Caco-2 (cell line): ENCODE measurements at regions of chr9 and their contacts with region 1.

Region 1: GRCh38 chr9:32968101-32969011 is 33.1 kb downstream of the APTX start:
- DNase-seq: peak in 1 of 2 experiments; percentile 52
- H3K4me3 ChIP-seq: no peak overlapping the region
- H3K4me3 Mint-ChIP-seq: no peak overlapping the region
- H3K27ac Mint-ChIP-seq: no peak overlapping the region
- H3K4me1 ChIP-seq: no peaks in the 10 kb centered on the region
- H3K4me1 Mint-ChIP-seq: no peaks in the 10 kb centered on the region
- H3K27me3 ChIP-seq: no peaks in the 10 kb centered on the region
- H3K27me3 Mint-ChIP-seq: no peaks in the 10 kb centered on the region
- CTCF ChIP-seq: peak; percentile 57 to 69

Region 2: DNA sequence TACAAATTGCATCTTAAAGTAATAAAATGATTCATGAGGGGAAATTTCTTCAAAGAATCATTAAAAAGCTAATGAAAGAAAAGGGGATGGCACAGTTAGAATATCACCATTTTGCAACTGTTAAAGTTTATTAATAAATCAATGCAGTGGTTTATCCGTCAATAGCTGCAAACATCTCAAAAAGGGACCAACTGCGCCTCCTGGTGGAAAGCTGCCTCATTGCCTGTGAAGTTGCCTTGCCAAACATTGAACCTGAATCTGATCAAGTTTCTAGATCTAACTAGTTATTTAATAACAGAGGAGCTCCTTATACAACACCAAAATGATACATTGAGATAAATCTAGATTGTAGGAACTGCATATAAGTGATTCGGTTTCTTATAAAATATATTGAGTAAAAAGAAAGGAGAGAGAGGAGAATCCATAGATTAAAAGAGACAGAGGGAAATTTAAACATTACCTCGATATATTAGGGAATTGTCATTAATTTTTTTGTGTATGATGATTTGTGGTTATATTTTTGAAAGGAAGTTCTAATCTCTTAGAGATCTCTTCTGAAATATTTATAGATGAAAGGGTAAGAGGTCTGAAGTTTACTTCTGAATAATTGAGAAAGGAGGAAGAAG is 388.5 kb before region 1 on chr9:
- CTCF ChIA-PET with region 1: interaction called, 39 read pairs
- POLR2A ChIA-PET with region 1: no interaction called
- intact Hi-C with region 1: loop called (anchors 2 kb)
- DNase-seq: peak; percentile 59 to 71
- H3K4me3 ChIP-seq: no peak overlapping the region
- H3K4me3 Mint-ChIP-seq: no peak overlapping the region
- H3K27ac Mint-ChIP-seq: no peak overlapping the region
- H3K4me1 ChIP-seq: peaks cover 15% of the 10 kb centered on the region
- H3K4me1 Mint-ChIP-seq: peaks cover 14% of the 10 kb centered on the region
- H3K27me3 ChIP-seq: no peaks in the 10 kb centered on the region
- H3K27me3 Mint-ChIP-seq: peaks cover 5% of the 10 kb centered on the region
- CTCF ChIP-seq: peak; percentile 90 to 92

Region 3: GRCh38 chr9:32589083-32589723 is 379.2 kb before region 1 on chr9:
- CTCF ChIA-PET with region 1: interaction called, 25 read pairs
- POLR2A ChIA-PET with region 1: no interaction called
- intact Hi-C with region 1: loop called (anchors 1 kb)
- DNase-seq: peak in 1 of 2 experiments; percentile 31
- H3K4me3 ChIP-seq: no peak overlapping the region
- H3K4me3 Mint-ChIP-seq: no peak overlapping the region
- H3K27ac Mint-ChIP-seq: no peak overlapping the region
- H3K4me1 ChIP-seq: no peaks in the 10 kb centered on the region
- H3K4me1 Mint-ChIP-seq: no peaks in the 10 kb centered on the region
- H3K27me3 ChIP-seq: no peaks in the 10 kb centered on the region
- H3K27me3 Mint-ChIP-seq: peaks cover 21% of the 10 kb centered on the region
- CTCF ChIP-seq: peak in 1 of 2 experiments; percentile 54

Region 4: GRCh38 chr9:32841314-32841713 is 127.0 kb before region 1 on chr9:
- CTCF ChIA-PET with region 1: interaction called, 3 read pairs
- POLR2A ChIA-PET with region 1: no interaction called
- intact Hi-C with region 1: loop called (anchors 5 kb)
- DNase-seq: no peak
- H3K4me3 ChIP-seq: no peak overlapping the region
- H3K4me3 Mint-ChIP-seq: no peak overlapping the region
- H3K27ac Mint-ChIP-seq: no peak overlapping the region
- H3K4me1 ChIP-seq: no peaks in the 10 kb centered on the region
- H3K4me1 Mint-ChIP-seq: no peaks in the 10 kb centered on the region
- H3K27me3 ChIP-seq: no peaks in the 10 kb centered on the region
- H3K27me3 Mint-ChIP-seq: peaks cover 17% of the 10 kb centered on the region
- CTCF ChIP-seq: peak in 1 of 2 experiments; percentile 10

Region 5: DNA sequence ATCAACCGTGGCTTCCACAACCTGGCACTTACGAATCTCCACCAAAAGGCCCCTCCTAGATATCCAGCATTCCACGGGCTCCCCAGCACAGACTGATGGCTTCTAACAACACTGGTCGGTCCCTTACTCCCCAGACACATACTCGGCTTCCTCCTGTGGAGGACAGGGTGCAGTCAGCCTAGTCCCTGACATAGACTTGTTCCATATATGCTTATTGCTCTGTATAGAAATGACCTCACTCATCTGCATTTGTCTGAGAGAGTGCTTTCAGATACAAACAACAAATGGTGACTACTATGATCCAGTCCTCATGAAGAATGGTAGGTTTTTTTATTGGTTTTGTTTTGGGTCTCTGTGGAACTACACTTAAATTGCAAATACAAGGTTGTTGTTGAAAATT is 112.6 kb before region 1 on chr9:
- CTCF ChIA-PET with region 1: no interaction called
- POLR2A ChIA-PET with region 1: no interaction called
- intact Hi-C with region 1: loop called (anchors 5 kb)
- DNase-seq: no peak
- H3K4me3 ChIP-seq: no peak overlapping the region
- H3K4me3 Mint-ChIP-seq: no peak overlapping the region
- H3K27ac Mint-ChIP-seq: no peak overlapping the region
- H3K4me1 ChIP-seq: no peaks in the 10 kb centered on the region
- H3K4me1 Mint-ChIP-seq: no peaks in the 10 kb centered on the region
- H3K27me3 ChIP-seq: no peaks in the 10 kb centered on the region
- H3K27me3 Mint-ChIP-seq: peaks cover 23% of the 10 kb centered on the region
- CTCF ChIP-seq: no peak

Region 6: GRCh38 chr9:33167046-33167808 is 198.9 kb after region 1 on chr9 and contains the start of gene B4GALT1:
- CTCF ChIA-PET with region 1: no interaction called
- POLR2A ChIA-PET with region 1: no interaction called
- intact Hi-C with region 1: no loop called
- DNase-seq: peak; percentile 95 to 97
- H3K4me3 ChIP-seq: peak within 1 kb of the TSS; percentile 91
- H3K4me3 Mint-ChIP-seq: peak within 1 kb of the TSS; percentile 89
- H3K27ac Mint-ChIP-seq: peak within 1 kb of the TSS; percentile 98
- H3K4me1 ChIP-seq: peaks cover 64% of the 10 kb centered on the region
- H3K4me1 Mint-ChIP-seq: peaks cover 66% of the 10 kb centered on the region
- H3K27me3 ChIP-seq: no peaks in the 10 kb centered on the region
- H3K27me3 Mint-ChIP-seq: no peaks in the 10 kb centered on the region
- CTCF ChIP-seq: peak in 1 of 2 experiments; percentile 13
- total RNA-seq, gene B4GALT1: 104 and 121 TPM in 2 replicates